Endothelial cell of umbilical vein (primary cell): ENCODE measurements at regions of chrX and their contacts with region 1.

Region 1: DNA sequence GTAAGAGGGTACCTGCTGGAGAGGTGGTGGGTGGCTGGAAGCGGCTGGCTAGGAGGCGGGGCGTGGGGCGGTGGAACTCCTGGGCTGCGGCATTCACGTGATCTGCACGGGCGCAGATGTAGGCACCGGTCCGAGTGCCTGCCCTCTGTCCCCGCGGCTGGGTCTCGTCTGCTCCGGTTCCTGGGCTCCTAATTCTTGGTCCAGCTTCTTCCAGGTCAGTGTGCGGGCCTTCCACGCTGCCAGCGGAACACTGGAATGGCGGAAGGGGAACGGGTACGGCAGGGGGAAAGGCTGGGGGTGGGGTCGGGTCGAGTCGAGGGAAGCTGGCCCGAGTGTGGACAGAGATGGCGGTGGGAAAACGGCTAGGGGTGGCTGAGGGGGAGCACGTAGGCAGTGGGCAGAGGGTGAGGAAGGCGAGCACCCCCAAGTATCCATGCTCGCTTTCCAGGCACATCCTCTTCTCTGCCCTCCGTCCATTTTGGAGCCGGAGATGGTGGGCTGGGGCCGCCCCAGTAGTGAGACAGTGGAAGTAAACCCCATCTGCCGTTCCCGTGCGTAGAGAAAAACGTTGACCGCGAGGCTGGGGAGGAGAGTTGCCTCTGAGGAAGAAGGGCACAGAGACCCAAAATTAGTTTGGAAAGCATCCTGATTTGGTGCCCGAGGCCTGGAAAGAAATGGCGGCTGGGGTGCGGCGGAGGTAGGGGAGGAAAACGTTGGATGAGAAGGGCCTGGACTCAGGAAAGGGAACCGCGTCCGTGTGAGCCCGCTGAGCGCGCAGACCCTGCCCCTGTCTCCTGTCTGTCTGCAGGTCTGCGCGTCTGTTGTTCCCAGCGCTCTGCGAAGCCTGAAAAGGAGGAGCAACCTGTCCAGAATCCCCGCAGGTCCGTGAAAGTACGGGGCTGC is at the start of gene TCEAL4:
- DNase-seq: peak; percentile 36
- H3K4me3 ChIP-seq: peak within 1 kb of the TSS; percentile 63 to 87 (median 68)
- H3K27ac ChIP-seq: peak within 1 kb of the TSS; percentile 32
- H3K4me1 ChIP-seq: no peaks in the 10 kb centered on the region
- H3K27me3 ChIP-seq: no peaks in the 10 kb centered on the region
- CTCF ChIP-seq: no peak
- POLR2A ChIP-seq: peak; percentile 30
- total RNA-seq, gene TCEAL4: 60.4 and 74.6 TPM in 2 replicates

Region 2: DNA sequence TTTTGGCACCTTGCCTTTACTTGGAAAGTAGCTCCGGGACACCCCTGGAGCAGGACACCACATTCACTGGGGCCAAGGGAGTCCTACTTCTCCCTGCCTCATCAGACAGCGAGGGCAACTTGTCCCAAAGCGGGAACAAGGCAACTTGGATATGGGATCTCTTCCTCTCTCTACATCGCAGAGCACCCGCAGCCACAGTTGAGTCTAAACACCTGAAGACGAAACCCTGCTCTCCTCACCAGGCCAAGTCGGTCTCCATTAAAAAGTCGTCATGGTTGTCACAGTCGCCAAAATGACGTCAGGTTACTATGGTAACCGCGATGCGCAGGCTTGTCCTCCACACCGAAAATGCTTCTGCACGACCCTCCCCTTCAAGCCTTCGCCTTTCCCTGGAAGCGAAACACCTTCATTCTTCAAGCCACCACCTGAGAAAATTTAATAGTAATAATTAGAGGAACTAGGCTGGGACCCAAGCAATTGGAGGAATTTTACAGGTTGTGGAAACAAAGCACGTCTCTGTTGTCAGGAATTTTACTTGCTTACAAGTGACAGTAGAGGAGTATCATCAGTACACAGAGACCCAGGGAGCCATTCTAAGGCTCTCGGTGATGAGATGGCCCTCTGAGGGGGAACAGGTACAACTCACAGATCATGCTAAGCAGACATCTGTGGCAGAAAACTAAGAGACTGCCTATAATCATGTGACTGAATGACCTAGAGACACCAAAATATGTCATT is 30.8 kb before region 1 on chrX:
- CTCF ChIA-PET with region 1: no interaction called
- POLR2A ChIA-PET with region 1: no interaction called
- dilution Hi-C with region 1: no loop called
- intact Hi-C with region 1: loop called (anchors 2 kb)
- DNase-seq: peak; percentile 67
- H3K4me3 ChIP-seq: peak overlapping the region; percentile 37 to 64 (median 39)
- H3K27ac ChIP-seq: peak overlapping the region; percentile 28
- H3K4me1 ChIP-seq: peaks cover 2% of the 10 kb centered on the region
- H3K27me3 ChIP-seq: no peaks in the 10 kb centered on the region
- CTCF ChIP-seq: no peak
- POLR2A ChIP-seq: no peak

Region 3: GRCh38 chrX:103674531-103675454 is 89.1 kb after region 1 on chrX:
- CTCF ChIA-PET with region 1: no interaction called
- POLR2A ChIA-PET with region 1: no interaction called
- dilution Hi-C with region 1: no loop called
- intact Hi-C with region 1: loop called (anchors 5 kb)
- DNase-seq: no peak
- H3K4me3 ChIP-seq: no peak overlapping the region
- H3K27ac ChIP-seq: no peak overlapping the region
- H3K4me1 ChIP-seq: no peaks in the 10 kb centered on the region
- H3K27me3 ChIP-seq: no peaks in the 10 kb centered on the region
- CTCF ChIP-seq: no peak
- POLR2A ChIP-seq: no peak